Lower leg skin (tissue), 4 donors: ENCODE measurements at regions of chr18 and their contacts with region 1.

Region 1: GRCh38 chr18:59056706-59057492 is 82.8 kb upstream of the SEC11C start:
- DNase-seq: peak in 1 of 2 donors; percentile 93
- H3K4me3 ChIP-seq: no peak overlapping the region
- CTCF ChIP-seq: peak in 1 of 3 donors; percentile 55
- POLR2A ChIP-seq: no peak

Region 2: GRCh38 chr18:58781627-58782194 is 275.2 kb before region 1 on chr18:
- intact Hi-C with region 1: loop called (anchors 5 kb)
- DNase-seq: peak; percentile 80 to 94
- H3K4me3 ChIP-seq: no peak overlapping the region
- CTCF ChIP-seq: peak in 1 of 3 donors; percentile 88
- POLR2A ChIP-seq: no peak

Region 3: DNA sequence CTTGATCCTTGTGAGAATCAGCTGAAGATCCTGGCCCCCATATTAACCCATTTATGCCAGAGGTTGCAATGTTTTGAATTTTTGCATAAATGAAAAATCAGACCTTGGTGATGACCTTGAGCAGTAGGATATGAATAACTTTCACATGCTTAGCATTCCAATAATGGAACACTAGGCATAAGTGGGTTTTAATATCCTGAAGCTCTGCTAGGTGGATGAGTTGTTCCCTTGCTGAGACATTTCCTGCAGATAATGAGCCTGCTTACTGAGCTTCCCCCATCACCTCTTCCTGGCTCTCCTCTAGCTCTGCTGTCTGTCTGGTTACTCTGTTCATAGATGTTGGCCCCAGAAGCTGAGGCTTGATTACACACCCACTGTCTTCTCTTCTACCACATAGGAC is 57.3 kb after region 1 on chr18:
- intact Hi-C with region 1: no loop called
- DNase-seq: no peak
- H3K4me3 ChIP-seq: no peak overlapping the region
- CTCF ChIP-seq: no peak
- POLR2A ChIP-seq: no peak

Region 4: GRCh38 chr18:59189746-59190145 is 132.8 kb after region 1 on chr18:
- intact Hi-C with region 1: no loop called
- DNase-seq: no peak
- H3K4me3 ChIP-seq: no peak overlapping the region
- CTCF ChIP-seq: no peak
- POLR2A ChIP-seq: no peak